ENCODE measurements at regions of chr1 and their contacts with region 1.

Region 1: GRCh38 chr1:200372080-200372884 is 37.6 kb downstream of the ZNF281 start:
- DNase-seq: peak; percentile 74 to 79
- H3K4me3 ChIP-seq: no peak overlapping the region
- H3K4me3 Mint-ChIP-seq: peak overlapping the region; percentile 45
- H3K27ac Mint-ChIP-seq: peak overlapping the region; percentile 66
- H3K4me1 ChIP-seq: peaks cover 68% of the 10 kb centered on the region
- H3K4me1 Mint-ChIP-seq: peaks cover 79% of the 10 kb centered on the region
- H3K27me3 ChIP-seq: no peaks in the 10 kb centered on the region
- H3K27me3 Mint-ChIP-seq: no peaks in the 10 kb centered on the region
- CTCF ChIP-seq: no peak

Region 2: GRCh38 chr1:200242110-200243041 is 129.9 kb before region 1 on chr1:
- CTCF ChIA-PET with region 1: no interaction called
- POLR2A ChIA-PET with region 1: no interaction called
- intact Hi-C with region 1: no loop called
- DNase-seq: no peak
- H3K4me3 ChIP-seq: peak overlapping the region; percentile 13
- H3K4me3 Mint-ChIP-seq: peak overlapping the region; percentile 68
- H3K27ac Mint-ChIP-seq: no peak overlapping the region
- H3K4me1 ChIP-seq: no peaks in the 10 kb centered on the region; the same call in 1 of the 2 replicates
- H3K4me1 Mint-ChIP-seq: no peaks in the 10 kb centered on the region
- H3K27me3 ChIP-seq: no peaks in the 10 kb centered on the region
- H3K27me3 Mint-ChIP-seq: no peaks in the 10 kb centered on the region
- CTCF ChIP-seq: no peak

Region 3: DNA sequence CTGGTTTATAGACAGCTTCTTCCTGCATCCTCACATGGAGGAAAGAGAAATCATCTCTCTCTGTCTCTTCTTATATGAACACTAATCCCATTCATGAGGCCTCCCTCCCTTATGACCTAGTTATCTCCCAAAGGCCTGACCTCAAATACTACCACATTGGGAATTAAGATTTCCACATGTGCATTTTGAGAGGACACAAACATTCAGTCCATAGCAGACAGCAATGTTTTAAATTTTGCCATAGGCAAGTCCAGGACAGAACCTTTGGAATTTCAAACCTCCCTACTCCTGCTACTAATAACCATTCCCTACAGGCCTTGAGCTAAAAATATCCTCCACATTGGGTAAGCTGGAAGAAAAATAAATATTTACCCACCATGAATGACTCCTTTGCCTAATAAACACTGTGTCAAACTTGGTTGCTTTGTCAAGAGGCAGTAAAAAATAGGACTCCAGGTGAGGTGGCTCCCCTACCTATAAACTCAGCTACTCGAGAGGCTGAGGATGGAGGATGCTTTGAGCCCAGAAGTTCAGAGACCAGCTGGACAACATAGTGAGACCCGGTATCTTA is 76.1 kb before region 1 on chr1:
- CTCF ChIA-PET with region 1: interaction called, 3 read pairs
- POLR2A ChIA-PET with region 1: no interaction called
- intact Hi-C with region 1: loop called (anchors 1 kb)
- DNase-seq: peak; percentile 51 to 61
- H3K4me3 ChIP-seq: no peak overlapping the region
- H3K4me3 Mint-ChIP-seq: peak overlapping the region; percentile 20
- H3K27ac Mint-ChIP-seq: peak overlapping the region; percentile 64
- H3K4me1 ChIP-seq: peaks cover 34% of the 10 kb centered on the region
- H3K4me1 Mint-ChIP-seq: peaks cover 31% of the 10 kb centered on the region
- H3K27me3 ChIP-seq: no peaks in the 10 kb centered on the region
- H3K27me3 Mint-ChIP-seq: no peaks in the 10 kb centered on the region
- CTCF ChIP-seq: no peak

Region 4: DNA sequence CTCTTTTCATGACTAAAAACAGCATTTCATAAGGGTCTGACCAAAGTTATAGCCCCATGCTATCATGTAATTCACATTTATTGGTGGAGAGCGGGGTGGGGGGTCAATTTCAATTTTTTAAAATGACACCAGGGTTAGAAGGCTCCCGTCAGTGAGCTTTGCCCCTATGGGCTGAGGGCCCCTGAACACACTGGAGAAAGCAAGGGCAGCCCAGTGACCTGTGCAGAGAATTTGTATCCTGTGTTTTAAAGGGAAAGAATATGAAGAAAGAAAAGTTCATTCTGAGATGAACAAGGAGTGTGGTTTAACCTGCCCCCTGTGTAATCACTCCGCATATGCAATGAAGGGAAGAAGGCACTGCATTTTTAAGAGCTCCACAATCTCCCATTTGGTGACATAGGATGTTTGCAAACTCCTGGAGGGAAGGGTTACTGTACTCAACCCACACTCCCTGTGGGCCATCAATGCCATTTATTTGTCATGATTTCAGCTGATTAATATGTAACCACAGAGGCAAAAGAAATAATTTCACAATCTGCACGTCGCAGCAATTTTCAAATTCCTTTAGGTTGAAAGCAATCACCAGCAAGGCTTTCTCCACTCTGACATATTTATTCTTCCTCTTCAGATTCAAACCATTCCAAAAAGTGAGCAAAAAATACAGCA is 58.1 kb before region 1 on chr1:
- CTCF ChIA-PET with region 1: interaction called, 4 read pairs
- POLR2A ChIA-PET with region 1: no interaction called
- intact Hi-C with region 1: loop called (anchors 1 kb)
- DNase-seq: peak; percentile 50 to 59
- H3K4me3 ChIP-seq: no peak overlapping the region
- H3K4me3 Mint-ChIP-seq: peak overlapping the region; percentile 52
- H3K27ac Mint-ChIP-seq: peak overlapping the region; percentile 86
- H3K4me1 ChIP-seq: peaks cover 28% of the 10 kb centered on the region
- H3K4me1 Mint-ChIP-seq: peaks cover 19% of the 10 kb centered on the region
- H3K27me3 ChIP-seq: no peaks in the 10 kb centered on the region
- H3K27me3 Mint-ChIP-seq: no peaks in the 10 kb centered on the region
- CTCF ChIP-seq: no peak

Region 5: DNA sequence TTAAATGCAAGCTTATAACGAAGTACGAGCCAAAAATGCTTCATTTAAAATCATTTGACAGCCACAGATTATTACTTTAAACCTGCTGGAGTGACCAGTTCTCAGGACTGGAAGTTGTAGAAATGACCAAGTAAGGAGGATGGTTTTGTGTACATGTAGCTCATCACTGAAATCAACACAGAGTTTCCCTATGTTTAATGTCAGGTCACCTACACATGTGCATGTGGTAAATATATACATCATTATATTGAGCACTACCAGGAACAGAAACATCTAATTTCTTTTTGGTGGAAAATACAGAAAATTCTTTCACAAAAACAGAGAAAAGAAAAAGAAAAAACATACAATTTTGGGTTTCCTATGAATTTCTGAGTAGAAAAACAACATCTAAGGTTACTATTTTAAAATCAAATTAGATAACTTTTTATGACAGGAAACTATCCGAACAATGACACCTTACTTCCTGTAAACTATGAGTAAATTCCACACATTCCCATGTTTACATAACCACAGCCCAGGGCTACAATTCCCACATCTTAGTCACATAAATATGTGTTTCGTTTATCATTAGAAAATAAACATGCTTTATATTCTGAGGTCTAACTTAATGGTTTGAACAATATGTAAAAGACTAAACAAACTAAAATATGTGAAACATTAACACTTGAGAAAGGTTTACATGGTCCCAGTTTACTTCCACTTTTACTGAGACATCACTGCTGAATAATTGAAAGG is 36.0 kb before region 1 on chr1:
- CTCF ChIA-PET with region 1: no interaction called
- POLR2A ChIA-PET with region 1: no interaction called
- intact Hi-C with region 1: loop called (anchors 1 kb)
- DNase-seq: peak in 1 of 2 experiments; percentile 22
- H3K4me3 ChIP-seq: no peak overlapping the region
- H3K4me3 Mint-ChIP-seq: peak overlapping the region; percentile 38
- H3K27ac Mint-ChIP-seq: peak overlapping the region; percentile 83
- H3K4me1 ChIP-seq: peaks cover 44% of the 10 kb centered on the region
- H3K4me1 Mint-ChIP-seq: peaks cover 35% of the 10 kb centered on the region
- H3K27me3 ChIP-seq: no peaks in the 10 kb centered on the region
- H3K27me3 Mint-ChIP-seq: no peaks in the 10 kb centered on the region
- CTCF ChIP-seq: no peak

Region 6: DNA sequence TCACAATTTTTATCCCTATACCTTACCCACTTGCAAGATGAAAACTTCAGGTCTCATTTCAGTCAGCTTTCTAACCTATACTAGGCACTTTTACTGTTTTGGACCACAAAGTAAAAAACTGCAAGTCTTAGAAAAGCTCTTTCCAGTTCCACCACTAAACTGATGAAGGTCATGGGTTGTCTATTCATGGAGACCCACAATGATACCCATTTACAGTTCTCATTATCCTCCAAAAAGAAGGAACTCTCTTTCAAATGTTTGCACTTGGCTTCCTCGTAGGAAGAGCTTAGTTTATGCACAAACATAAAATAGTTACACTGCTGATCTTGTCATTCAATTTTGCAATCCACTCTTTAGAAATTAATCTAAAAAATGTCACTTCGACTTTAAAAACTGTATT is 28.3 kb after region 1 on chr1:
- CTCF ChIA-PET with region 1: no interaction called
- POLR2A ChIA-PET with region 1: no interaction called
- intact Hi-C with region 1: no loop called
- DNase-seq: no peak
- H3K4me3 ChIP-seq: no peak overlapping the region
- H3K4me3 Mint-ChIP-seq: no peak overlapping the region
- H3K27ac Mint-ChIP-seq: no peak overlapping the region
- H3K4me1 ChIP-seq: no peaks in the 10 kb centered on the region
- H3K4me1 Mint-ChIP-seq: peaks cover 7% of the 10 kb centered on the region
- H3K27me3 ChIP-seq: no peaks in the 10 kb centered on the region
- H3K27me3 Mint-ChIP-seq: no peaks in the 10 kb centered on the region
- CTCF ChIP-seq: no peak

Region 7: GRCh38 chr1:200468264-200469001 is 96.2 kb after region 1 on chr1:
- CTCF ChIA-PET with region 1: no interaction called
- POLR2A ChIA-PET with region 1: no interaction called
- intact Hi-C with region 1: loop called (anchors 5 kb)
- DNase-seq: no peak
- H3K4me3 ChIP-seq: no peak overlapping the region
- H3K4me3 Mint-ChIP-seq: no peak overlapping the region
- H3K27ac Mint-ChIP-seq: no peak overlapping the region
- H3K4me1 ChIP-seq: peaks cover 22% of the 10 kb centered on the region
- H3K4me1 Mint-ChIP-seq: peaks cover 22% of the 10 kb centered on the region
- H3K27me3 ChIP-seq: no peaks in the 10 kb centered on the region
- H3K27me3 Mint-ChIP-seq: no peaks in the 10 kb centered on the region
- CTCF ChIP-seq: no peak

Measured in Caco-2 (cell line).